Calu3 (cell line): ENCODE measurements at regions of chrX and their contacts with region 1.

Region 1: GRCh38 chrX:104668550-104668949 is 102.6 kb downstream of the IL1RAPL2 start:
- DNase-seq: no peak
- H3K4me3 Mint-ChIP-seq: no peak overlapping the region
- H3K27ac Mint-ChIP-seq: no peak overlapping the region
- H3K4me1 Mint-ChIP-seq: peaks cover 14% of the 10 kb centered on the region
- H3K27me3 Mint-ChIP-seq: no peaks in the 10 kb centered on the region
- CTCF ChIP-seq: no peak

Region 2: GRCh38 chrX:104565791-104566680 is 102.5 kb before region 1 on chrX and contains the start of gene IL1RAPL2:
- CTCF ChIA-PET with region 1: interaction called, 4 read pairs
- intact Hi-C with region 1: loop called (anchors 5 kb)
- DNase-seq: peak; percentile 68
- H3K4me3 Mint-ChIP-seq: peak within 1 kb of the TSS; percentile 76
- H3K27ac Mint-ChIP-seq: no peak within 1 kb of the TSS
- H3K4me1 Mint-ChIP-seq: no peaks in the 10 kb centered on the region
- H3K27me3 Mint-ChIP-seq: peaks cover 74% of the 10 kb centered on the region
- CTCF ChIP-seq: peak; percentile 68
- total RNA-seq, gene IL1RAPL2: not detected in 2 replicates

Region 3: DNA sequence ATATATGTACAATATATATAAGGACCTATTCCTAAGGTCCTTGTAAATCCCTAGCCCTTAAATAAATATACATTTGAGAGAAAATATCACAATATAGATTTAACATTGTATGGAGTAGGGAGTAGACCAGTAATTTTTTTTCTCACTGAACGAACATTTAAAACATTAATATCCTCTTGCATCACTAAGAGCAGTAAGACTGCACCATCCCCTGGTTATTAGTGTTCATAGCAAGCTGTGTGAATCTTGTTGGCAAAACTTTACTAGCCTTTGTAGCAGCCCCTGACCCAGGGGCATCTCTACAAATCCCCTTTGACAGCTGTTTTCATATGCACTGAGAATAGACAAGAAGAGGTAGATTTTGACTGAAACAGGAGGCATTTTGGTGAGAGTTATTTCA is 44.0 kb after region 1 on chrX:
- CTCF ChIA-PET with region 1: no interaction called
- intact Hi-C with region 1: loop called (anchors 5 kb)
- DNase-seq: no peak
- H3K4me3 Mint-ChIP-seq: no peak overlapping the region
- H3K27ac Mint-ChIP-seq: no peak overlapping the region
- H3K4me1 Mint-ChIP-seq: no peaks in the 10 kb centered on the region
- H3K27me3 Mint-ChIP-seq: peaks cover 22% of the 10 kb centered on the region
- CTCF ChIP-seq: no peak

Region 4: GRCh38 chrX:104922206-104922621 is 253.7 kb after region 1 on chrX:
- CTCF ChIA-PET with region 1: interaction called, 9 read pairs
- intact Hi-C with region 1: loop called (anchors 1 kb)
- DNase-seq: peak; percentile 80
- H3K4me3 Mint-ChIP-seq: no peak overlapping the region
- H3K27ac Mint-ChIP-seq: no peak overlapping the region
- H3K4me1 Mint-ChIP-seq: no peaks in the 10 kb centered on the region
- H3K27me3 Mint-ChIP-seq: no peaks in the 10 kb centered on the region
- CTCF ChIP-seq: peak; percentile 94

Region 5: GRCh38 chrX:105190252-105190853 is 521.8 kb after region 1 on chrX:
- CTCF ChIA-PET with region 1: no interaction called
- intact Hi-C with region 1: loop called (anchors 2 kb)
- DNase-seq: peak; percentile 33
- H3K4me3 Mint-ChIP-seq: no peak overlapping the region
- H3K27ac Mint-ChIP-seq: no peak overlapping the region
- H3K4me1 Mint-ChIP-seq: no peaks in the 10 kb centered on the region
- H3K27me3 Mint-ChIP-seq: no peaks in the 10 kb centered on the region
- CTCF ChIP-seq: peak; percentile 66